ENCODE measurements at regions of chr13 and their contacts with region 1.

Region 1: GRCh38 chr13:101144808-101145419 is 271.4 kb downstream of the NALCN start:
- DNase-seq: no peak
- H3K4me3 ChIP-seq: no peak overlapping the region
- H3K27ac ChIP-seq: no peak overlapping the region
- H3K27me3 ChIP-seq: no peaks in the 10 kb centered on the region
- CTCF ChIP-seq: peak; percentile 65 to 94 (median 80)

Region 2: DNA sequence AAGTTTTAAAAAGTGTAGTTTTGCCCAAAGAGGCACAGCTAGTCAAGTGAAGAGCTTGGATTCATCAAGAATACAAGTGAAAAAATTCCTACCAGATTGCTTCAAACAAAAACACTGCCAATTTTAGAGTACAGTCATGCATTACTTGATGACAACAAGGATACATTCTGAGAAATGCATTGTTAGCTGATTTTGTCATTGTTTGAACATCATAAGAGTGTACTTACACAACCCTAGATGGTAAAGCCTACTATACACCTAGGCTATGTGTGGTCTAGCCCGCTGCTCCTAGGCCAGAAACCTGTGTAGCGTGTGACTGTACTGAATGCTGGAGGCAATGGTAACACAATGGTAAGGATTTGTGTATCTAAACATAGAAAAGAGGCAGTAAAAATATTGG is 511.5 kb before region 1 on chr13:
- intact Hi-C with region 1: no loop called
- DNase-seq: no peak
- H3K4me3 ChIP-seq: peak overlapping the region in 45 of 59 donors; percentile 6 to 74 (median 52)
- H3K27ac ChIP-seq: peak overlapping the region in 50 of 59 donors; percentile 1 to 95 (median 84)
- H3K27me3 ChIP-seq: no peaks in the 10 kb centered on the region
- CTCF ChIP-seq: no peak

Region 3: GRCh38 chr13:101474419-101474957 is 329.6 kb after region 1 on chr13:
- intact Hi-C with region 1: loop called (anchors 2 to 5 kb)
- DNase-seq: peak in 6 of 10 donors; percentile 36 to 73 (median 48)
- H3K4me3 ChIP-seq: no peak overlapping the region
- H3K27ac ChIP-seq: no peak overlapping the region
- H3K27me3 ChIP-seq: peaks cover 0 to 5% (median 0%) of the 10 kb centered on the region in 45 donors
- CTCF ChIP-seq: peak in 54 of 56 donors; percentile 9 to 79 (median 50)

Region 4: GRCh38 chr13:101757446-101758039 is 612.6 kb after region 1 on chr13:
- intact Hi-C with region 1: loop called in 1 of 2 experiments (anchors 5 kb)
- DNase-seq: no peak
- H3K4me3 ChIP-seq: no peak overlapping the region
- H3K27ac ChIP-seq: no peak overlapping the region
- H3K27me3 ChIP-seq: no peaks in the 10 kb centered on the region
- CTCF ChIP-seq: peak; percentile 24 to 77 (median 58)

Region 5: GRCh38 chr13:101916108-101916757 is 771.3 kb after region 1 on chr13:
- intact Hi-C with region 1: loop called (anchors 10 kb)
- DNase-seq: peak in 6 of 10 donors; percentile 51 to 63 (median 60)
- H3K4me3 ChIP-seq: peak overlapping the region; percentile 26 to 71 (median 58)
- H3K27ac ChIP-seq: peak overlapping the region in 23 of 59 donors; percentile 11 to 60 (median 39)
- H3K27me3 ChIP-seq: peaks cover 0 to 69% (median 25%) of the 10 kb centered on the region in 45 donors
- CTCF ChIP-seq: peak in 40 of 56 donors; percentile 9 to 47 (median 26)